ENCODE measurements at regions of chr6 and their contacts with region 1.

Region 1: GRCh38 chr6:8219352-8219943 is 117.1 kb upstream of the EEF1E1 start:
- DNase-seq: peak; percentile 51
- H3K4me3 Mint-ChIP-seq: no peak overlapping the region
- H3K27ac Mint-ChIP-seq: no peak overlapping the region
- H3K4me1 Mint-ChIP-seq: no peaks in the 10 kb centered on the region
- H3K27me3 Mint-ChIP-seq: no peaks in the 10 kb centered on the region

Region 2: GRCh38 chr6:7725849-7726415 is 493.5 kb before region 1 on chr6 and contains the start of gene BMP6:
- CTCF ChIA-PET with region 1: interaction called, 16 read pairs
- DNase-seq: peak; percentile 82
- H3K4me3 Mint-ChIP-seq: peak within 1 kb of the TSS; percentile 72
- H3K27ac Mint-ChIP-seq: peak within 1 kb of the TSS; percentile 58
- H3K4me1 Mint-ChIP-seq: peaks cover 16% of the 10 kb centered on the region
- H3K27me3 Mint-ChIP-seq: peaks cover 91% of the 10 kb centered on the region

Region 3: DNA sequence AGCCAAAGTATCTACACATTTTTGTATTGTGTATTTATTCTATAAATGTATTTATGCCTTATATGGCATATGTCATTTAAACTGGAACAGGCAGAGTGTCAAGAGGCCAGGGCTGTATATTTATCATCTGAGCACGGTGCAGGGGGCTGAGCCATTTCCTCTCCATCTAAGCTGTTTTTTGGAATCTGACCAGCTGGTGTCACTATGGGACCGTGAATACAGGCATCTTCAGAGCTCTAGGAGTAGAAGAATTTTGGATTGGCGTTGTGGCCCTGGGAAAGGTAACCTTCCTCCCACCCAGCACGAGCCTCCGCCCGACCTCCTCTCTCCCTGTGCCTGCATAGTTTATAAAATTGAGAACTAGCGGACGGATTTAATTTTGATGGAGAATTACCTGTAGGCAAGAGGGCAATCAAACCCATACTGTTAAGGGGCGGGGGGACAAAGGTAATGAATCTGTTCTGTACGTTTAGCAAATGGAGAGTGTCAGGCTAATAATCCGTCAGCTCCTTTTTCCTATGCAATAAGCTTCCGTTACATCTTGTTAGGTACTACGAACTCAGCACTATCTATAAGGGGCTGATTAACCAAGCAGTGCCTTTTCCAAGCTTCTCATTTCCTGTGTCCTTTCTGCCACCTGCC is 88.1 kb before region 1 on chr6:
- CTCF ChIA-PET with region 1: interaction called, 83 read pairs
- DNase-seq: peak; percentile 54
- H3K4me3 Mint-ChIP-seq: no peak overlapping the region
- H3K27ac Mint-ChIP-seq: no peak overlapping the region
- H3K4me1 Mint-ChIP-seq: no peaks in the 10 kb centered on the region
- H3K27me3 Mint-ChIP-seq: peaks cover 14% of the 10 kb centered on the region

Region 4: GRCh38 chr6:8335381-8335780 is 115.9 kb after region 1 on chr6:
- CTCF ChIA-PET with region 1: no interaction called
- DNase-seq: no peak
- H3K4me3 Mint-ChIP-seq: no peak overlapping the region
- H3K27ac Mint-ChIP-seq: no peak overlapping the region
- H3K4me1 Mint-ChIP-seq: no peaks in the 10 kb centered on the region
- H3K27me3 Mint-ChIP-seq: no peaks in the 10 kb centered on the region